ENCODE measurements at regions of chr12 and their contacts with region 1.

Region 1: GRCh38 chr12:39541471-39541870 is 78.1 kb downstream of the ABCD2 start:
- DNase-seq: no peak
- H3K4me3 ChIP-seq: no peak overlapping the region
- H3K4me3 Mint-ChIP-seq: no peak overlapping the region
- H3K27ac Mint-ChIP-seq: no peak overlapping the region
- H3K4me1 ChIP-seq: no peaks in the 10 kb centered on the region
- H3K4me1 Mint-ChIP-seq: no peaks in the 10 kb centered on the region
- H3K27me3 ChIP-seq: no peaks in the 10 kb centered on the region
- H3K27me3 Mint-ChIP-seq: no peaks in the 10 kb centered on the region
- CTCF ChIP-seq: no peak

Region 2: DNA sequence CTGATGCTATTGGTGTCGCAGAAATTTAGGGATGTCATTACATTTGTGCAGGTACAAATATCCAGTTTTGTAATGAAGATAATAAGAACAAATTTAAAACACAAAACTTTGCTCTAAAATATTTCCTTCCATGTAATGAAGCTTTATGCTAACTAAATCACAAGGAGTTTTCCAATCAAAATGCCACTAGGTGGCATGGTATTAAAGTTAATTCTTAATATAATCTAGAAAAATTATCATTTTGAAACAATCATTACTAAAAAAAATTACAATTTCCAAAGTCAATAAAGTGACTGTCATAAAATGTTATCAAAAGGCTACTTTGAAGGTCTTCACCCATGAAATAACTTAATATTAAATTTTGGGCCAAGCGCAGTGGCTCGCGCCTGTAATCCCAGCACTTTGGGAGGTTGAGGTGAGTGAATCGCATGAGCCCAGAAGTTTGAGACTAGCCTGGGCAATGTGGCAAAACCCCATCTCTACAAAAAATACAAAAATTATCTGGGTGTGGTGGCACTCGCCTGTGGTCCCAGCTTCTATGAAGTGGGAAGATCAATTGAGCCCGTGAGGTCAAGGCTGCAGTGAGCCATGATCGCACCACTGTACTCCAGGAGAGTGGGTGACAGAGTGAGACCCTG is 176.0 kb before region 1 on chr12:
- CTCF ChIA-PET with region 1: no interaction called
- POLR2A ChIA-PET with region 1: no interaction called
- intact Hi-C with region 1: loop called (anchors 10 kb)
- DNase-seq: no peak
- H3K4me3 ChIP-seq: no peak overlapping the region
- H3K4me3 Mint-ChIP-seq: no peak overlapping the region
- H3K27ac Mint-ChIP-seq: no peak overlapping the region
- H3K4me1 ChIP-seq: peaks cover 22% of the 10 kb centered on the region
- H3K4me1 Mint-ChIP-seq: peaks cover 6% of the 10 kb centered on the region
- H3K27me3 ChIP-seq: no peaks in the 10 kb centered on the region
- H3K27me3 Mint-ChIP-seq: no peaks in the 10 kb centered on the region
- CTCF ChIP-seq: no peak

Region 3: DNA sequence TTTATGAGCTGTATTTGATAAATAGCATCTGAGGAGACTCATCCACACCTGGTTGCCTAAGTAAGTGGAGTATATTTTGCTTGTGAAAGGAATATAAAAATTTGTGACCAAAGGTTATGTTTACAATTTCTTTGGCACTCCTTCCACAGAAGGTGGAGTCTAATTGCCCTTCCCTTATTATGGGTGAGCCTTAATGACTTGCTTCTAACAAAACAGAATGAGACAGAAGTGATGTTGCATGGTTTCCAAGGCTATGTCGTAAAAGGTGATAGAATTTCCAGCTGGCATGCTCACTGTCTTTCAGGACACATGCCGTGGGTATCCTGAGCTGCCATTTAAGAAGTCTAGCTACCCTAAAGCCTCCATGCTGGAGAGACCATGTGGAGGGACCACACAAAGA is 194.9 kb after region 1 on chr12:
- CTCF ChIA-PET with region 1: no interaction called
- POLR2A ChIA-PET with region 1: no interaction called
- intact Hi-C with region 1: no loop called
- DNase-seq: no peak
- H3K4me3 ChIP-seq: no peak overlapping the region
- H3K4me3 Mint-ChIP-seq: no peak overlapping the region
- H3K27ac Mint-ChIP-seq: no peak overlapping the region
- H3K4me1 ChIP-seq: no peaks in the 10 kb centered on the region
- H3K4me1 Mint-ChIP-seq: no peaks in the 10 kb centered on the region
- H3K27me3 ChIP-seq: no peaks in the 10 kb centered on the region
- H3K27me3 Mint-ChIP-seq: no peaks in the 10 kb centered on the region
- CTCF ChIP-seq: no peak